GM18951 (cell line): ENCODE measurements at regions of chr6 and their contacts with region 1.

Region 1: GRCh38 chr6:106360410-106360988 is at the start of gene CRYBG1:
- POLR2A ChIP-seq: no peak

Region 2: GRCh38 chr6:106908386-106908840 is 547.9 kb after region 1 on chr6:
- in situ Hi-C with region 1: loop called (anchors 10 kb)
- POLR2A ChIP-seq: no peak